Testis (tissue), 5 donors: ENCODE measurements at regions of chr9 and their contacts with region 1.

Region 1: DNA sequence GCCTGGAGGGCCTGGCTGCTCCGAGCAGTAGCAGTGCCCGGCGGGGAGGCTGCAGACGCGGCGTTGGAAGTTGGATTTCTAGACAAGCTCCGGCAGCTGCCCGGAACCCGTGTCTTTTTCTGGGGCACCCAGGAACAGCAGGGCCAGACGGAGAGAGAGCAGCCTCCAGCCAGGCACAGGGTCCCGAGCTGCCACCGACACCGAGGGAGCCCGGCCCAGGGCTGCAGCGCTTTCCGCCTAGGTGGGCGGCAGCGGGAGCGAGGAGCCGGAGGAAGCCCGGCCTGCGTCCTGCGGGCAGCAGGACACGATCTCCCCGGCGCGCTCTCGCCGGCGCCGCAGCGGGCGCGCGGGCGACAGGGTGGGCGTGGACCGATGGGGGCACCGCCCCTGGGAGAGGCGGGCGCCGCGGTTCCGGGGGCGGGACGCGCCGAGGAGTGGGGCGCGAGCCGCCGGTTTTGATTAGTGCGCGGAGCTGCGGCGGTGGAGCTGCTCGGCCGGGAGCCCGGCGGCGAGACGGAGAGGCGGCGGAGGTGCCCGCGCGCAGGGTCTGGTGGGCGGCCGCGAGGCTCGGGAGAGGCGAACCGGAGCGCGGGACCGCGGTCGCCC is at the start of gene UGCG:
- DNase-seq: peak; percentile 90
- H3K4me3 ChIP-seq: peak within 1 kb of the TSS; percentile 86 to 96
- H3K27ac ChIP-seq: peak within 1 kb of the TSS; percentile 96 to 97
- H3K4me1 ChIP-seq: peaks cover 25% of the 10 kb centered on the region
- H3K27me3 ChIP-seq: no peaks in the 10 kb centered on the region
- CTCF ChIP-seq: no peak
- POLR2A ChIP-seq: peak; percentile 70
- total RNA-seq, gene UGCG: 29.0 to 38.6 TPM

Region 2: GRCh38 chr9:112061152-112061740 is 164.8 kb after region 1 on chr9:
- intact Hi-C with region 1: loop called (anchors 10 kb)
- DNase-seq: peak; percentile 32
- H3K4me3 ChIP-seq: no peak overlapping the region
- H3K27ac ChIP-seq: no peak overlapping the region
- H3K4me1 ChIP-seq: no peaks in the 10 kb centered on the region
- H3K27me3 ChIP-seq: no peaks in the 10 kb centered on the region
- CTCF ChIP-seq: no peak
- POLR2A ChIP-seq: no peak